Activated CD4-positive, alpha-beta memory T cell treated with anti-CD3 and anti-CD28 coated beads for 36 hours (primary cell): ENCODE measurements at regions of chr6 and their contacts with region 1.

Region 1: DNA sequence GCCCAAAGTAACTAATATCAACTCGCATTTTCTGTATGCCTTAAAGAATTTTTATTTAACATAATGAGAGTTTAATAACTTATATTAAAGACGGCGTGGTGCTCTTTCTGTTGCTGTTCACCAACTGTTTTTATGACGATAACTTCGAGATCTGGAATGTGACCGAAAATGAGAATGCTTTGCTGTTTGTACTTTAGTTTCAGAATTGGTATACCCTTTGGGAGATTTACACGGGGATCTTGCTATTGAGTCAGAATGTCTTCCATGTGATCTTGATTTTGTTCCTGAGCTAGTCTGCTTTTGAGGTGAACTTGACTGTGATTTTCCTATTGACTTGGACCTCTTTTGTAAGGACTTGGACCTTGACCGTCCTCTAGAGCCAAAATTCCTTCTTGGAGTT is 17.9 kb downstream of the PNRC1 start:
- DNase-seq: no peak
- H3K4me3 Mint-ChIP-seq: no peak overlapping the region
- H3K27ac Mint-ChIP-seq: peak overlapping the region; percentile 14
- H3K4me1 Mint-ChIP-seq: peaks cover 11% of the 10 kb centered on the region
- H3K27me3 Mint-ChIP-seq: no peaks in the 10 kb centered on the region

Region 2: GRCh38 chr6:89117211-89118108 is 19.0 kb after region 1 on chr6 and contains the start of gene SRSF12:
- CTCF ChIA-PET with region 1: no interaction called
- POLR2A ChIA-PET with region 1: no interaction called
- intact Hi-C with region 1: loop called (anchors 2 kb)
- DNase-seq: peak; percentile 33
- H3K4me3 Mint-ChIP-seq: peak within 1 kb of the TSS; percentile 72
- H3K27ac Mint-ChIP-seq: no peak within 1 kb of the TSS
- H3K4me1 Mint-ChIP-seq: peaks cover 6% of the 10 kb centered on the region
- H3K27me3 Mint-ChIP-seq: peaks cover 10% of the 10 kb centered on the region
- total RNA-seq, gene SRSF12: 0.10 to 0.12 TPM

Region 3: DNA sequence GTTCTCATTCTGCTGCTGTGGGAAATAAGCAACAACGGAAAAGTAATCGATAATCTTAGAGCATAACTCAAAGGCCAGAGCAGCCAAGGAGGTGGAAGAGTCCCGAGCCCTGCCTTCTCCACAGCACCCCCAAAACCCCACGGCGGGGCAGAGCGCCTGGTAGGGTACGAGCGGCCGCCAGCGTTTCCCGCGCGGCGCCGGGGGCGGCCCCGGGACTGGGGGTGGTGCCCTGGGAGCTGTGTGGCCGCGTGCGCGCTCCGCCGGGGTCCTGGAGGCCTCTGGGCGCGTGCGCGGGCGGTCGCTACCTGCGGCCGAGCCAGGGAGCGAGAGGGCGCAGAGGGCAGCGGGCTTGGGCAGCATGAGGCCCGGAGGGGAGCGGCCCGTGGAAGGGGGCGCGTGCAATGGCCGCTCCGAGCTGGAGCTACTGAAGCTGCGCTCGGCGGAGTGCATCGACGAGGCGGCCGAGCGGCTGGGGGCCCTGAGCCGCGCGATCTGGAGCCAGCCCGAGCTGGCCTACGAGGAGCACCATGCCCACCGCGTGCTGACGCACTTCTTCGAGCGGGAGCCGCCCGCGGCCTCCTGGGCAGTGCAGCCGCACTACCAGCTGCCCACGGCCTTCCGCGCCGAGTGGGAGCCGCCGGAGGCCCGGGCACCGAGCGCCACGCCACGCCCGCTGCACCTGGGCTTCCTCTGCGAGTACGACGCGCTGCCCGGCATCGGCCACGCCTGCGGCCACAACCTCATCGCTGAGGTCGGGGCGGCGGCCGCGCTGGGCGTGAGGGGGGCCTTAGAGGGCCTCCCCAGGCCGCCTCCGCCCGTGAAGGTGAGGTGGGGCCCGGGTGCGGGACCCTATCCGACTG is 47.6 kb after region 1 on chr6 and contains the start of gene PM20D2:
- CTCF ChIA-PET with region 1: interaction called, 8 read pairs
- POLR2A ChIA-PET with region 1: no interaction called
- intact Hi-C with region 1: loop called (anchors 1 kb)
- DNase-seq: peak; percentile 71
- H3K4me3 Mint-ChIP-seq: peak within 1 kb of the TSS; percentile 85
- H3K27ac Mint-ChIP-seq: peak within 1 kb of the TSS; percentile 95
- H3K4me1 Mint-ChIP-seq: peaks cover 37% of the 10 kb centered on the region
- H3K27me3 Mint-ChIP-seq: no peaks in the 10 kb centered on the region
- total RNA-seq, gene PM20D2: 8.4 to 8.9 TPM